Heart left ventricle (tissue), 16 donors: ENCODE measurements at regions of chr4 and their contacts with region 1.

Region 1: DNA sequence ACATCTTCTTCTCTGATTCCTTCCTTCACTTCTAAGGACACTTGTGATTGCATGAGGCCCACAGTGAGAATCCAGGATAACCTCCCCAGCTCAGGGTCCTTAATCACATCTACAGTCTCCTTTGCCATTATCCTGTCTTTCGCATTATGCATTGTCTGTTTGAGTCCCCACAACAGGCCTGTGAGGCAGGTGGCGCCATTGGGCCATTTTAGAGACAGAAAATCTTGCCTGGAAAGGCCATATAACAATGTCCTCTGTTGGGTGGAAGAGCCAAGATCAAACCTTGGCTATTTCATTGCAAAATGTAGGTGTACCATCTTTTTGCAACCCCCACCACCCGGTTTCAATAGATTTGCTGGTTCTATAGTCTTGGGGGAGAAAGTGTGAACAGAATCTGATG is 11.8 kb upstream of the DCUN1D4 start:
- DNase-seq: peak; percentile 35 to 75 (median 54)
- ATAC-seq: peak in 3 of 4 donors; percentile 66 to 75 (median 75)
- H3K4me3 ChIP-seq: no peak overlapping the region
- H3K27ac ChIP-seq: no peak overlapping the region
- H3K4me1 ChIP-seq: no peaks in the 10 kb centered on the region
- H3K27me3 ChIP-seq: peaks cover 0 to 12% (median 0%) of the 10 kb centered on the region in 9 donors
- CTCF ChIP-seq: peak; percentile 44 to 80 (median 62)
- POLR2A ChIP-seq: no peak

Region 2: DNA sequence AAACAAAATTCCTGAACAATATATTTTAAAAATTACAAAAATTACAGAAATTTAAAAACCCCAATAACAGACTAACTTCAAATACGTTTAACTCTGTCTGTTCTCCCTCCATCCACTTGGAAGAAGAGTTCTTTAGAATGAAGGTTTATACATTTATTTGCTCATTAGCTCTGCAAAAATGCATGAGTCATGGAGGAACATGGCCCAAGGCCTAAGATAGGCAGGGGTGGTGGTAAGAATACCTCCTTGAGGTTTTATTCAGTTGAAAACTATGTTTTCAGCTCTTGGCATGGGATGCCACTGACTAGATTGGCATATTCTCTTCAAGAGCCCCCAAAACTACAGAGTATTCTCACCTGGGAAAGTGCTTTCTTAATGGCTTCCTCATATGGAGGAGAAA is 197.8 kb after region 1 on chr4:
- intact Hi-C with region 1: loop called in 3 of 10 experiments (anchors 2 to 5 kb)
- DNase-seq: no peak
- ATAC-seq: no peak
- H3K4me3 ChIP-seq: no peak overlapping the region
- H3K27ac ChIP-seq: no peak overlapping the region
- H3K4me1 ChIP-seq: peaks cover 0 to 7% (median 0%) of the 10 kb centered on the region in 12 donors
- H3K27me3 ChIP-seq: no peaks in the 10 kb centered on the region
- CTCF ChIP-seq: no peak
- POLR2A ChIP-seq: no peak